GM13976 (cell line): ENCODE measurements at regions of chr5 and their contacts with region 1.

Region 1: GRCh38 chr5:78269088-78269703 is 25.3 kb downstream of the AP3B1 start:
- DNase-seq: no peak
- CTCF ChIP-seq: peak; percentile 10

Region 2: DNA sequence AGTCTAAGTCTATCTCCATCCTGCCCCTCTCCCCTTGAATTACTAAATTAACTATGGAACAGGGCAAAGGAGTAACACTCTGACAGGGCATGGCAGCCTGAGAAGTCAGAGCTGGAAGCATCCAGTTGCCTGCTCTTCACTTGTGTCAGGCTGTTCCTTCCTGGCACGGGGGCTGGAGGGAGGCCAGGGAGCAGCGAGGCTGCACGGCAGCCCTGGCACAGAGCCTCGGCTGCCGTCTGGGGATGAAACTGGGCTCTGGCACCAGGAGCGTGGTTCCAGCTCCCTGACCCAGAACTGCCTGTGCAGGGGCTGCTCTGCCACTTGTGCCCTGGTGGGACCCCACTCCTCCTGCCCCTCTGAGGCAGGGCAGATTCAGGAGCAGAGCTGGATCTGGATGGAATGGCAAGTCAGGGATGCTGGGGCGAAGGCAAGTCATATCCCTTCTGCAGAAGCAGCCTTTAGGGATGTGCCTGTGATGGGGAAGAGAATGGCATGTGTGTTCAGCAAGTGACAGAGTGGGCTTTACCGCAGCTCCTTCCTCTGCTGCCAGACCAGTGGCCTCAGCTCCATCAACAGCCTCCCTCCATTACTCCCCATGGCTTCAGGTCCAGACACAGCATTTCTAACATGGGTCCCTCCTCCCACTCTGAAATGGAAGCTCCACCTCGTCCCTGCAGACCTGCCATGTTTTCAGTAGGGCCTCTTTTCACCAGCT is 1100.9 kb before region 1 on chr5:
- in situ Hi-C with region 1: loop called (anchors 25 kb)
- DNase-seq: no peak
- CTCF ChIP-seq: no peak

Region 3: GRCh38 chr5:77852514-77853352 is 416.5 kb before region 1 on chr5:
- in situ Hi-C with region 1: loop called (anchors 25 kb)
- DNase-seq: peak; percentile 85
- CTCF ChIP-seq: no peak